Panc1 (cell line): ENCODE measurements at regions of chr1 and their contacts with region 1.

Region 1: GRCh38 chr1:160951443-160952128 is 3.0 kb downstream of the ITLN2 start:
- DNase-seq: peak; percentile 36
- ATAC-seq: peak; percentile 90
- H3K4me3 ChIP-seq: no peak overlapping the region
- H3K27ac ChIP-seq: no peak overlapping the region
- H3K4me1 ChIP-seq: no peaks in the 10 kb centered on the region
- H3K27me3 ChIP-seq: no peaks in the 10 kb centered on the region
- CTCF ChIP-seq: peak; percentile 82

Region 2: GRCh38 chr1:160675641-160676410 is 275.8 kb before region 1 on chr1:
- CTCF ChIA-PET with region 1: no interaction called
- POLR2A ChIA-PET with region 1: no interaction called
- in situ Hi-C with region 1: no loop called
- intact Hi-C with region 1: loop called (anchors 5 kb)
- DNase-seq: peak; percentile 42
- ATAC-seq: peak; percentile 95
- H3K4me3 ChIP-seq: no peak overlapping the region
- H3K27ac ChIP-seq: no peak overlapping the region
- H3K4me1 ChIP-seq: no peaks in the 10 kb centered on the region
- H3K27me3 ChIP-seq: peaks cover 12% of the 10 kb centered on the region; the same call in 1 of the 2 replicates
- CTCF ChIP-seq: peak; percentile 94

Region 3: DNA sequence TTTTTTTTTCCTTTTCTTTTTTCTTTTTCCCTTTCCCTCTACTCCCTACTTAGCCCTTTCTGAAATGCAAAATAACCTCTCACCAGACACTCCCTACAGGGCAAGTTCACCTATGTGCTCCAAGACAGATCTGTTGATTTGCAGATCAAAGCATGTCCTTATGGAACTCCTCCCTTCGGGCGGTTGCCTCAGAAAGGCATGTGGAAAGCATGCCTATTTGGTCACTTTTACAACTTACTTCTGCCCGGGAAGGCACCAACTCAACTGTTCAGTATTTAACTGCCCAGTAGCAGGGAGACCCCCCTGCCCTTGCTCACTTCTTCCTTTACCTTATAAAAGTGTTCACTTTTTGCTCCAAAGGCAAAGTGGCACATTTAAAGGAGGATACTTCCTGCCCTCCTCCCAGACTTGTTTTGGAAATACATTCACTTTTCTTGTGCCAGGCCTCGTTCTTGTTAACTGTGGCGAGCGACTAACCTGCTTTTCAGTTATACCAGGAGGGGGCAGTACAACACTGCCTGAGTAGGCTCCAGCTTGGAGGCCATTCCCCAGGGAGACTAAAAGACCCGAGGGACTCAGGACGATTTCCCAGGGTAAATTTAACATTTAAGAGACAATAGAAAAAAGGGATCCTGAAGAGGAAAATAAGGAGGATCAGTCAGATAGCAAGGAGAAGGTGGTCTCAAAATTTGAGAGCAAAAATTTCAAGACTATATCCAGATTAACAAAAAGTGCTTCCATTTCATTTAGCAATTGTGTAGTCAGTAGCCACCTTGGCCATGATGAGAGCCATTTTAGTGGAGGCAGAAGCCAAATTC is 224.9 kb before region 1 on chr1:
- CTCF ChIA-PET with region 1: interaction called, 4 read pairs
- POLR2A ChIA-PET with region 1: no interaction called
- in situ Hi-C with region 1: no loop called
- intact Hi-C with region 1: loop called (anchors 5 kb)
- DNase-seq: peak; percentile 30
- ATAC-seq: peak; percentile 88
- H3K4me3 ChIP-seq: no peak overlapping the region
- H3K27ac ChIP-seq: no peak overlapping the region
- H3K4me1 ChIP-seq: peaks cover 4% of the 10 kb centered on the region; the same call in 1 of the 2 replicates
- H3K27me3 ChIP-seq: peaks cover 14% of the 10 kb centered on the region
- CTCF ChIP-seq: peak; percentile 89

Region 4: GRCh38 chr1:160830321-160831153 is 121.0 kb before region 1 on chr1:
- CTCF ChIA-PET with region 1: interaction called, 8 read pairs
- POLR2A ChIA-PET with region 1: no interaction called
- in situ Hi-C with region 1: no loop called
- intact Hi-C with region 1: loop called (anchors 1 kb)
- DNase-seq: peak; percentile 30
- ATAC-seq: peak; percentile 85
- H3K4me3 ChIP-seq: no peak overlapping the region
- H3K27ac ChIP-seq: no peak overlapping the region
- H3K4me1 ChIP-seq: no peaks in the 10 kb centered on the region
- H3K27me3 ChIP-seq: 0 out of 2 replicates have a peak, but pooled peaks cover 3% of the 10 kb centered on the region
- CTCF ChIP-seq: peak; percentile 79